Activated naive CD4-positive, alpha-beta T cell treated with anti-CD3 and anti-CD28 coated beads for 36 hours (primary cell): ENCODE measurements at regions of chr12 and their contacts with region 1.

Region 1: DNA sequence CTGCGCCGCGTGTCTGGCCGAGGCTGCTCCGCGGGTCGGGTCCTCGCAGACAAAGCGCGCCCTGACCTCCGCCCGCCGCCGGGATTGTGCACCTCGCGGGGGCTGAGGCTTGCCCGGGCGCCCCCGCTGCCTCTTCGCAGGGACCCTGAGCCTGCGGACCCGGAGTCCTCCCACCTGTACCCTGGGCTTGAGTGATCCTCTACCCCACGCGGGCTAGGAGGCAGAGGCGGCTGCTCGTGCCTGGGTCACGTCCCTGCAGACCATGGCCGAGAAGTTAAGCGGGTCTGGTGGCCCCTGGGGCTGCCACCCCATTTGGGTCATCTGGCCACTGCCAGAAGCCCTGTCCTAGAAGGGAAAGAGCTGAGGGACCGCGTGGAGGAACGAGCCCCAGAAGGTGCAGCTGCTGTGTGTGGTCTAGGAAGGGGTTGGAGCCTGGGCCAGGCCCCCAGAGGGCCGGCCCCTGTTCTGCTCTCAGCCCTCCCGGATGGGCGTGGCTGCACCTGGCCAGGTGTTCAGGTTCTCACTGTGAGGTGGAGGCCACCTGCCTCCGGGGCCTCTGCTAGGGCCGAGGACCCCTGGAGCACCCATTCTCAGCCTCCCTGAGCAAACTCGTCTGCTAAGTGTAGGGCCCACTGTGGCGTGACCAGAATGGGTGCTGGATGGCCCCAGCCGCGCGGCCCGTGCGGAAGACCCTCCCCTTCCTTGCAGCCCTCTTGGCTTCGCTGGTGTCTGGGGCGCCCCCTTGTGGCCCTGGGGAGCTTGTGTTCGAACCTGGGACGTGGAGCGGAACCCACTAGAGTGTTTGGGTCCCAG is 49.6 kb downstream of the LRCOL1 start:
- DNase-seq: peak; percentile 83
- H3K4me3 Mint-ChIP-seq: peak overlapping the region; percentile 75
- H3K27ac Mint-ChIP-seq: no peak overlapping the region
- H3K4me1 Mint-ChIP-seq: peaks cover 5% of the 10 kb centered on the region
- H3K27me3 Mint-ChIP-seq: peaks cover 7% of the 10 kb centered on the region

Region 2: GRCh38 chr12:132429946-132430643 is 130.7 kb before region 1 on chr12:
- CTCF ChIA-PET with region 1: no interaction called
- intact Hi-C with region 1: loop called (anchors 5 kb)
- DNase-seq: peak; percentile 71
- H3K4me3 Mint-ChIP-seq: peak overlapping the region; percentile 59
- H3K27ac Mint-ChIP-seq: no peak overlapping the region
- H3K4me1 Mint-ChIP-seq: peaks cover 20% of the 10 kb centered on the region
- H3K27me3 Mint-ChIP-seq: no peaks in the 10 kb centered on the region

Region 3: GRCh38 chr12:132672017-132672515 is 111.2 kb after region 1 on chr12:
- CTCF ChIA-PET with region 1: no interaction called
- intact Hi-C with region 1: no loop called
- DNase-seq: no peak
- H3K4me3 Mint-ChIP-seq: no peak overlapping the region
- H3K27ac Mint-ChIP-seq: no peak overlapping the region
- H3K4me1 Mint-ChIP-seq: no peaks in the 10 kb centered on the region
- H3K27me3 Mint-ChIP-seq: no peaks in the 10 kb centered on the region

Region 4: GRCh38 chr12:132687208-132688164 is 126.7 kb after region 1 on chr12 and contains the starts of genes POLE and PXMP2:
- CTCF ChIA-PET with region 1: no interaction called
- intact Hi-C with region 1: no loop called
- DNase-seq: peak; percentile 96
- H3K4me3 Mint-ChIP-seq: peak within 1 kb of the TSS; percentile 79
- H3K27ac Mint-ChIP-seq: peak within 1 kb of the TSS; percentile 66
- H3K4me1 Mint-ChIP-seq: peaks cover 23% of the 10 kb centered on the region
- H3K27me3 Mint-ChIP-seq: no peaks in the 10 kb centered on the region
- total RNA-seq, gene POLE: 118 to 121 TPM
- total RNA-seq, gene PXMP2: 11.3 to 12.8 TPM

Region 5: GRCh38 chr12:133080368-133081158 is 519.7 kb after region 1 on chr12 and contains the start of gene ZNF140:
- CTCF ChIA-PET with region 1: no interaction called
- intact Hi-C with region 1: no loop called
- DNase-seq: peak; percentile 95
- H3K4me3 Mint-ChIP-seq: no peak within 1 kb of the TSS
- H3K27ac Mint-ChIP-seq: no peak within 1 kb of the TSS
- H3K4me1 Mint-ChIP-seq: peaks cover 13% of the 10 kb centered on the region
- H3K27me3 Mint-ChIP-seq: no peaks in the 10 kb centered on the region
- total RNA-seq, gene ZNF140: 13.3 to 13.9 TPM